T-cell (primary cell): ENCODE measurements at regions of chr13 and their contacts with region 1.

Region 1: DNA sequence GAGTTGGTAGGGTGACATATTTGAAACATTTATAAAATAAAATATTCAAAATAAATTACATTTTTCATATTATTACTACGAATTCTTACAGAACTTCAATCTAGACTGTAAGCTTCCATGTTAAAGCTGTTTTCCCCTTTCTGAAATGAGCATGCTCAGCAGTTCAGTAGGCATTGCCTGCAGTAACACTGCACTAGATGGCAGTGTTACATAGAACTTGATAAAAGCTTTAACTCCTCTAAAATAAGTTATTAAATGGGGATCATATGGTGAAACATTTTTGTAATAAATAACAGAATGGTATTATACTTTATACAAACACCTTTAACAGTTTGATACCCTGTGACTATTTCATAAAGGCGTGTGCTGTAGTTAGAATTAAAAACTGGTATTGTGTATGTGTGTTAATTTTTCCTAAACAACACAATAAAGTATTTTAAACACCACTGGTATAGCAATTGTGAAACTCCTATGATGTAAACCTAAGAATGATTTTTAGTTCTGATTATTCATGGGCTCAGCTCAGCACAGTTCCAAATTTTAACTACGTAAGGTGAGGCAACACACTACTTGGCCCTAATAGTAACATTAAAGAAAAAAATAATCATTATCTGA is 11.6 kb upstream of the GPR18 start:
- DNase-seq: peak in 16 of 35 experiments; percentile 15 to 81 (median 25)
- ATAC-seq: peak; percentile 66 to 81 (median 70)
- H3K4me3 ChIP-seq: no peak overlapping the region
- H3K4me3 Mint-ChIP-seq: no peak overlapping the region
- H3K27ac ChIP-seq: peak overlapping the region; percentile 87
- H3K27ac Mint-ChIP-seq: peak overlapping the region; percentile 84 to 87
- H3K4me1 ChIP-seq: peaks cover 26 to 32% of the 10 kb centered on the region in 2 experiments
- H3K4me1 Mint-ChIP-seq: peaks cover 63 to 65% (median 64%) of the 10 kb centered on the region in 3 donors
- H3K27me3 ChIP-seq: no peaks in the 10 kb centered on the region
- H3K27me3 Mint-ChIP-seq: no peaks in the 10 kb centered on the region

Region 2: GRCh38 chr13:99028890-99029289 is 240.8 kb before region 1 on chr13:
- CTCF ChIA-PET with region 1: interaction called, 4 to 13 read pairs
- POLR2A ChIA-PET with region 1: no interaction called
- DNase-seq: peak in 33 of 35 experiments; percentile 12 to 73 (median 43)
- ATAC-seq: peak; percentile 30 to 75 (median 52)
- H3K4me3 ChIP-seq: no peak overlapping the region
- H3K4me3 Mint-ChIP-seq: no peak overlapping the region
- H3K27ac ChIP-seq: peak overlapping the region; percentile 2
- H3K27ac Mint-ChIP-seq: peak overlapping the region in 1 of 2 donors; percentile 49
- H3K4me1 ChIP-seq: peaks cover 0 to 9% of the 10 kb centered on the region in 2 experiments
- H3K4me1 Mint-ChIP-seq: peaks cover 65 to 92% (median 86%) of the 10 kb centered on the region in 3 donors
- H3K27me3 ChIP-seq: no peaks in the 10 kb centered on the region
- H3K27me3 Mint-ChIP-seq: no peaks in the 10 kb centered on the region

Region 3: GRCh38 chr13:99214232-99214631 is 55.5 kb before region 1 on chr13:
- CTCF ChIA-PET with region 1: interaction called, 7 to 16 read pairs
- POLR2A ChIA-PET with region 1: interaction called, 3 read pairs
- DNase-seq: peak in 12 of 35 experiments; percentile 12 to 51 (median 34)
- ATAC-seq: peak in 2 of 4 experiments; percentile 9 to 19
- H3K4me3 ChIP-seq: peak overlapping the region; percentile 47 to 54
- H3K4me3 Mint-ChIP-seq: peak overlapping the region; percentile 90 to 93 (median 90)
- H3K27ac ChIP-seq: peak overlapping the region; percentile 83
- H3K27ac Mint-ChIP-seq: peak overlapping the region; percentile 98 to 99
- H3K4me1 ChIP-seq: peaks cover 53 to 65% of the 10 kb centered on the region in 2 experiments
- H3K4me1 Mint-ChIP-seq: peaks cover 82 to 85% (median 84%) of the 10 kb centered on the region in 3 donors
- H3K27me3 ChIP-seq: no peaks in the 10 kb centered on the region
- H3K27me3 Mint-ChIP-seq: no peaks in the 10 kb centered on the region

Region 4: GRCh38 chr13:99296398-99296797 is 26.7 kb after region 1 on chr13:
- CTCF ChIA-PET with region 1: interaction called, 5 to 22 read pairs
- POLR2A ChIA-PET with region 1: interaction called, 3 to 19 read pairs
- DNase-seq: peak in 1 of 35 experiments; percentile 62
- ATAC-seq: peak; percentile 56 to 72 (median 68)
- H3K4me3 ChIP-seq: no peak overlapping the region
- H3K4me3 Mint-ChIP-seq: peak overlapping the region; percentile 67 to 85 (median 82)
- H3K27ac ChIP-seq: peak overlapping the region; percentile 80
- H3K27ac Mint-ChIP-seq: peak overlapping the region; percentile 97 to 99
- H3K4me1 ChIP-seq: peaks cover 32 to 53% of the 10 kb centered on the region in 2 experiments
- H3K4me1 Mint-ChIP-seq: peaks cover 83 to 89% (median 85%) of the 10 kb centered on the region in 3 donors
- H3K27me3 ChIP-seq: no peaks in the 10 kb centered on the region
- H3K27me3 Mint-ChIP-seq: no peaks in the 10 kb centered on the region

Region 5: DNA sequence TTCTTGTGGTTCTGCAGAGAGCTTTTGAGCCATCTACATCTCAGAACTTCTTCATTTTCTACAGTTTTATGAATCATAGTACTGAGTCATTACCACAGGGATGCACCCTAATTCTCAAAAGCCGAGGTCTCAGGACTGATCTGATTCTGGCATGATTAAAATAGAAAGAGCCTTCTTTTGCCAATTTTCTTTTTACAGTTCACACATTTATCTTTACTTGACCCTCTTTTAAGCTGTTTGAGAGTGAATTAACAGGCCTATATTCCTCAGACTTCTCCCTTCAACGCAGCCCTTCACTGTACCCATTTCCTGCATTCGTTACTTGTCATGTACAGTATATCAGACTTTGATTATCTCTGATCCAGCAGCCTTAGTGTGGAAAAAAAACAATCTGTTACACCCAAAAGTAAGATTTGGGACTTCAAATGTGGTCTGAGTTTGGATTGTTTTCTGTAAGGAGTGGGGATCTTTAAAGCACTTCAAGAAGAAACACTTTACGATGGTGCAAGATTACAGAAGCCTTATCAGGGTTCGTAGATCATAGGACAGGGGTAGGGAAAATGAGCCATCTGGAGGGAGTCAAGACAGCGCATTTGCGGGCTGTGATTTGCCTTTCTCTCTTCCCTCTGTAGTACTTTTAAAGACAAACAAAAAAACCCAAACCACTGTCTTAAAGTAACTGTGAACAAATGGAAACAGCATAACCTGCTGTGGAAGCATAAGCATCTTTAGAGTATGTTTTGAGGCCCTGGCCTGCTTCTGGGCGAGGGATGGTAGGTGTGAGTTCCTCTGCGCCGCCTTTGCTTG is 52.8 kb after region 1 on chr13:
- CTCF ChIA-PET with region 1: interaction called in 1 of 2 experiments, 14 read pairs
- POLR2A ChIA-PET with region 1: no interaction called
- DNase-seq: peak in 16 of 35 experiments; percentile 6 to 75 (median 28)
- ATAC-seq: peak; percentile 85 to 91 (median 89)
- H3K4me3 ChIP-seq: peak overlapping the region in 1 of 2 donors; percentile 19
- H3K4me3 Mint-ChIP-seq: peak overlapping the region; percentile 49 to 57 (median 55)
- H3K27ac ChIP-seq: peak overlapping the region; percentile 93
- H3K27ac Mint-ChIP-seq: peak overlapping the region; percentile 92 to 98
- H3K4me1 ChIP-seq: peaks cover 28 to 50% of the 10 kb centered on the region in 2 experiments
- H3K4me1 Mint-ChIP-seq: peaks cover 73 to 86% (median 75%) of the 10 kb centered on the region in 3 donors
- H3K27me3 ChIP-seq: no peaks in the 10 kb centered on the region
- H3K27me3 Mint-ChIP-seq: no peaks in the 10 kb centered on the region

Region 6: GRCh38 chr13:99380921-99381645 is 111.3 kb after region 1 on chr13:
- CTCF ChIA-PET with region 1: interaction called, 5 to 57 read pairs
- POLR2A ChIA-PET with region 1: interaction called, 3 to 12 read pairs
- DNase-seq: peak; percentile 42 to 76 (median 63)
- ATAC-seq: peak; percentile 44 to 72 (median 66)
- H3K4me3 ChIP-seq: no peak overlapping the region
- H3K4me3 Mint-ChIP-seq: peak overlapping the region in 2 of 3 donors; percentile 47 to 75
- H3K27ac ChIP-seq: peak overlapping the region; percentile 81
- H3K27ac Mint-ChIP-seq: peak overlapping the region; percentile 98
- H3K4me1 ChIP-seq: peaks cover 66 to 85% of the 10 kb centered on the region in 2 experiments
- H3K4me1 Mint-ChIP-seq: peaks cover 89 to 96% (median 96%) of the 10 kb centered on the region in 3 donors
- H3K27me3 ChIP-seq: no peaks in the 10 kb centered on the region
- H3K27me3 Mint-ChIP-seq: no peaks in the 10 kb centered on the region

Region 7: GRCh38 chr13:99436686-99437416 is 167.1 kb after region 1 on chr13:
- CTCF ChIA-PET with region 1: interaction called, 53 to 195 read pairs
- POLR2A ChIA-PET with region 1: interaction called in 1 of 2 experiments, 6 read pairs
- DNase-seq: peak; percentile 88 to 97 (median 94)
- ATAC-seq: peak; percentile 49 to 72 (median 68)
- H3K4me3 ChIP-seq: peak overlapping the region in 1 of 2 donors; percentile 34
- H3K4me3 Mint-ChIP-seq: peak overlapping the region; percentile 1 to 54 (median 50)
- H3K27ac ChIP-seq: peak overlapping the region; percentile 0
- H3K27ac Mint-ChIP-seq: peak overlapping the region; percentile 83 to 95
- H3K4me1 ChIP-seq: peaks cover 46 to 52% of the 10 kb centered on the region in 2 experiments
- H3K4me1 Mint-ChIP-seq: peaks cover 57 to 58% (median 58%) of the 10 kb centered on the region in 3 donors
- H3K27me3 ChIP-seq: peaks cover 0 to 5% of the 10 kb centered on the region in 2 experiments
- H3K27me3 Mint-ChIP-seq: no peaks in the 10 kb centered on the region